ENCODE measurements at regions of chr3 and their contacts with region 1.

Region 1: GRCh38 chr3:141460097-141460704 is 26.6 kb upstream of the RASA2 start:
- DNase-seq: peak; percentile 72
- H3K4me3 ChIP-seq: no peak overlapping the region
- H3K27ac ChIP-seq: no peak overlapping the region
- H3K27me3 ChIP-seq: no peaks in the 10 kb centered on the region
- CTCF ChIP-seq: peak; percentile 92

Region 2: GRCh38 chr3:139928708-139929505 is 1531.3 kb before region 1 on chr3:
- CTCF ChIA-PET with region 1: no interaction called
- POLR2A ChIA-PET with region 1: no interaction called
- DNase-seq: no peak
- H3K4me3 ChIP-seq: no peak overlapping the region
- H3K27ac ChIP-seq: no peak overlapping the region
- H3K27me3 ChIP-seq: peaks cover 2% of the 10 kb centered on the region
- CTCF ChIP-seq: no peak

Region 3: GRCh38 chr3:141311496-141312353 is 148.5 kb before region 1 on chr3:
- CTCF ChIA-PET with region 1: interaction called, 328 read pairs
- POLR2A ChIA-PET with region 1: no interaction called
- DNase-seq: peak; percentile 95
- H3K4me3 ChIP-seq: peak overlapping the region; percentile 90
- H3K27ac ChIP-seq: peak overlapping the region; percentile 65
- H3K27me3 ChIP-seq: no peaks in the 10 kb centered on the region
- CTCF ChIP-seq: peak; percentile 76

Region 4: DNA sequence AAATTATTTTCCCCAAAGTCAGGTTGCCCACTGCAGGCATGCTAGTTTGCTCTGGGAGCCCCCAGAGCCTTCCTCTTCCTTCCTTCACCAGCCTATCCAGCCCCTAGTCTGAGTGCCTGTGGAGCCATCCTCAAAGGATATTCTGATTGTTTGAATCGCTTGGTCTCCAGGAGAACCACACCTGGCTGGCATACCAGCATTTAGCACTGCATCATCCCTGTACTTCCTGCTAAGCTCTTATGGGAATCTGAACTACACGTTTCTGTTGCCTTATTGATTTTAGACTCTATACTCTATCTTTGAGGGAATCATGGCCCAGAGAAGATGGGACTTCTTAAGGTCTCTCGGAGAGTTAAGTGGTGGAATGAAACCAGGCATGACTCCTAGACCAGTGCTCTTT is 65.6 kb before region 1 on chr3:
- CTCF ChIA-PET with region 1: no interaction called
- POLR2A ChIA-PET with region 1: no interaction called
- DNase-seq: no peak
- H3K4me3 ChIP-seq: no peak overlapping the region
- H3K27ac ChIP-seq: no peak overlapping the region
- H3K27me3 ChIP-seq: no peaks in the 10 kb centered on the region
- CTCF ChIP-seq: no peak

Region 5: DNA sequence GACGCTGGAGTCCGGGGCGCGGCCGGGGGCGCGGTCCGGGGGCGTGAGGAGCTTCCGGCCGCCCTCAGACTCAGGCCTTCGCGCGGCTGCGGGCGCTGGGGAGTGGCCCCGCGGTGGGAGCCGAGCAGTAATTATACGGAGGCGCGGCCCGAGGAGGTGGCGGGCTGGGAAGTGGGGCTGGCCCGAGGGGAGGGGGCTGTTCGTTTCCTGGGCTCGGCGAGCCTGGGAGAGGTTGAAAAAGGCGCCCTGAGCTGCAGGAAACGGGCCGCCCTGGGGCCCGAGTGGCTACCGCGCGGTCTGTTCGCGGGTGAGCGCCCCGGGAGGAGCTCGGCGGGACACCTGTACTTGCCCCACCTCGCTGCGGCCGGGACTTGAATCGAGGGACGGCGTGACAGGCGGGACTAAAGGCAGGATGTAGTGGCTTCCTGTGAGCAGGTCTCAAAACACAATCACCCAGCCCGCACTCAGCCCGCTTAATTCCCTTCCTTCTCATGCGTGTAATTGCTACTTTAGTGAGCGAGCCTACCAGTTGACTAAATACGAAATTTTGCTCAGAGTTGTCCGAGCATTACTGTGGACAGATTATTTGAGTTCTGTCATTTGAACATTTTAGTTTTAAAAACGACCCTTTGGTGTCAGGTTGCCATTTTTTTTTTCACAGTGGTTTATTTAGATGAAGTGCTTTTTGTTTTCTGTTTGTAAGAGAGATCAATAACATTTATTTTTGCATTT is 27.5 kb after region 1 on chr3:
- CTCF ChIA-PET with region 1: interaction called, 12 read pairs
- POLR2A ChIA-PET with region 1: no interaction called
- DNase-seq: no peak
- H3K4me3 ChIP-seq: peak overlapping the region; percentile 76
- H3K27ac ChIP-seq: peak overlapping the region; percentile 53
- H3K27me3 ChIP-seq: no peaks in the 10 kb centered on the region
- CTCF ChIP-seq: no peak

Region 6: GRCh38 chr3:141553055-141553454 is 92.9 kb after region 1 on chr3:
- CTCF ChIA-PET with region 1: interaction called, 172 read pairs
- POLR2A ChIA-PET with region 1: no interaction called
- DNase-seq: no peak
- H3K4me3 ChIP-seq: no peak overlapping the region
- H3K27ac ChIP-seq: no peak overlapping the region
- H3K27me3 ChIP-seq: no peaks in the 10 kb centered on the region
- CTCF ChIP-seq: no peak

Region 7: DNA sequence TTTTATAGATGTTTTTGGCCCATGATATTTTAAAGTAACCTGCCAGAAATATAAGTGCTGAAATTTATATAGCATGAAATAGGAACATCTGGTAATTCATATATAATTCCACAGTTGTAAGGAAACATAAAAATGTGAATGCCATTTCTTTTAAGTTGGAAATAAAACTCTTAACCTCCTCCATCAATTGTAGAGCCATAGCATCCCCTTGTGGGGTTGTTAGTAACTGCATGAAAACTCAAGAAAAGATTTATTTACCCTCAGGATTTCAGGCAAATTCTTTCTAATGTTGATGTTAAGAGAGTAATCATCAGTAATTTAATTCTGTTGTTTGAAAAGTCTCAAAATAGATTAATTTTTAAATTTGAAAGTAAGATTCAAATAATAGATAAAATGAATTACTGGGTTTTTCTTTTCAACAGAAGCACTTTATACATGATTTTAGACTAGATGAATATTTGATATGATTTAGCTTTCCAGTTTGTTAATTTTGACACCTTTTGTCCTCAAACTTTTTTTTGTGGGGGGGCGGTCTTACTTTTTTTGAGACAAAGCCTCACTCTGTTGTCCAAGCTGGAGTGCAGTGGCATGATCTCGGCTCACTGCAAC is 101.3 kb after region 1 on chr3:
- CTCF ChIA-PET with region 1: interaction called, 172 read pairs
- POLR2A ChIA-PET with region 1: no interaction called
- DNase-seq: peak; percentile 53
- H3K4me3 ChIP-seq: no peak overlapping the region
- H3K27ac ChIP-seq: no peak overlapping the region
- H3K27me3 ChIP-seq: no peaks in the 10 kb centered on the region
- CTCF ChIP-seq: peak; percentile 100

Measured in AG04450 (cell line).